ENCODE measurements at regions of chr4 and their contacts with region 1.

Region 1: GRCh38 chr4:145132511-145133098 is 34.5 kb downstream of the ABCE1 start:
- DNase-seq: no peak
- H3K4me3 Mint-ChIP-seq: peak overlapping the region; percentile 23
- H3K27ac Mint-ChIP-seq: peak overlapping the region; percentile 65
- H3K4me1 Mint-ChIP-seq: peaks cover 64% of the 10 kb centered on the region
- H3K27me3 Mint-ChIP-seq: no peaks in the 10 kb centered on the region

Region 2: DNA sequence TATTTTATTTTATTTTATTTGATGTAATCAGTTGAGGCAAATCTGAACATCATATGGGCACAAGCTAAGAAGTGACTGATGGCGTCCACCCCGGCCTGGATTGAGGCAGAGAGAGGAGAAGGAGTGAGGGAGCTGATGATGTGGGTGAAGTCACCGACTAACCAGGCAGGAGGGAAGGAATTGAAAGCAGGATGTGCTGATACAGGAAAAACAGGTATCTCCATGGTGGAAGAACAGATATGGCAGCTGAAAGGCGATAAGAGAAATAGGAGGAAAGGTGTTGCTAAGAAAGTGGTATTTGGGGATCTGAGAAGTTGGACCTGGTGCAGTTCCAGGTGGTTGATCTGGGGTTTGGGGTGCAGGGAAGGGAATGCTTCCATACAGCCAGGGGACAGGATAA is 1075.8 kb before region 1 on chr4:
- intact Hi-C with region 1: no loop called
- DNase-seq: no peak
- H3K4me3 Mint-ChIP-seq: no peak overlapping the region
- H3K27ac Mint-ChIP-seq: no peak overlapping the region
- H3K4me1 Mint-ChIP-seq: no peaks in the 10 kb centered on the region
- H3K27me3 Mint-ChIP-seq: no peaks in the 10 kb centered on the region

Region 3: DNA sequence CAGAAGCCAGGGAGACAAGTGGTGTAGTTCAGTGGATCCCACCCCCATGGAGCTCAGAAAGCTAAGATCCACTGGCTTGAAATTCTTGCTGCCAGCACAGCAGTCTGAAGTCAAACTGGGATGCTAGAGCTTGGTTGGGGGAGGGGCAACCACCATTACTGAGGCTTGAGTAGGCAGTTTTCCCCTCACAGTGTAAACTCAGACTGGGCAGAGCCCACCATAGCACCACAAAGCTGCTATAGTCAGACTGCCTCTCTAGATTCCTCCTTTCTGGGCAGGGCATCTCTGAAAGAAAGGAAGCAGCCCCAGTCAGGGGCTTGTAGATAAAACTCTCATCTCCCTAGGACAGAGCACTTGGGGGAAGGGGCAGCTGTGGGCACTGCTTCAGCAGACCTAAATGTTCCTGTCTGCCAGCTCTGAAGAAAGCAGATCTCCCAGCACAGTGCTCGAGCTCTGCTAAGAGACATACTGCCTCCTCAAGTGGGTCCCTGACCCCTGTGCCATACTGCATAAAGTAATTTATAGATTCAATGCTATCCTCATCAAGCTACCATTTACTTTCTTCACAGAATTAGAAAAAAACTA is 323.5 kb before region 1 on chr4:
- intact Hi-C with region 1: no loop called
- DNase-seq: no peak
- H3K4me3 Mint-ChIP-seq: no peak overlapping the region
- H3K27ac Mint-ChIP-seq: no peak overlapping the region
- H3K4me1 Mint-ChIP-seq: no peaks in the 10 kb centered on the region
- H3K27me3 Mint-ChIP-seq: no peaks in the 10 kb centered on the region

Region 4: DNA sequence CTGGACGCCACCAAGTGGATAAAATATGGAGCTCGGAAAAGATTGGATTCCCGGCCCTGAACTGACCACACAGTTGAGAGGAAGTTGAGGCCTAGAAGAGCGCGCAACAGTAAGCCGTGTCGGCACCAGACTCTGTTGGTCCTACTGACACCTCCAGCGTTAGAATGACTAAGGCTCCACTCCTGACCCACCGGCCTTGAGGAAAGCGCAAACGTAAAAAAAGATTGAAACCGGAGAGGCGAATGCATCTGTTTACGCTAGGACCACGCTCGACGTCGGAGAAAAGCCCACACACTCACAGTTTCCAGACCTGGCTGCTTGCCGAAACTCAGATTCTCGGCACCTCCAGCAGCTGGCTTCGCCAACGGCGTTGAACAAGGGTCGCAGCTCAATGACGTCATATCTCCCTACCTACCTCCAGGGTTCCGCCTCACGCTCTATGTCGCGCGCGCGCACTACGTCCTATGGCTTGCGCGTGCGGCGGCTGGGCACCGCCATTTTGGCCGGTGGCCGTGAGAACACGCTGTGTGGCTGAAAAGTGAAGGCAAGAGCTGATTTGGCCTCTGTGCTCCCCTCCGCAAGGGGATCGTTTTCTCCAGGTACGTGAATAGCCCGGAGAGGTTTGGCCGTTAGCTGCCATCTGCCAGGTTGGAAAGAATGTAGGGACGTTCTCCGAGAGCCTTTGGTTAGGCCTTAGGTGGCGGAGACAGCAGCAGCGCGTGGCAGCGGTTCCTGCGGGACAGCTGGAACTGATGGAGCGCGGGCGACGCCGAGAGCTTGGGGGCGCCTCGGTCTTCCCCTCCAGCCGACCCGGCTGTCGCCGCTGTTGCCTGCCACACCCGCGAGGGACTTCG is 34.6 kb before region 1 on chr4 and contains the starts of genes ABCE1 and ANAPC10:
- intact Hi-C with region 1: loop called (anchors 1 kb)
- DNase-seq: peak; percentile 93
- H3K4me3 Mint-ChIP-seq: peak within 1 kb of the TSS; percentile 95
- H3K27ac Mint-ChIP-seq: peak within 1 kb of the TSS; percentile 99
- H3K4me1 Mint-ChIP-seq: peaks cover 25% of the 10 kb centered on the region
- H3K27me3 Mint-ChIP-seq: no peaks in the 10 kb centered on the region
- total RNA-seq, gene ABCE1: 162 and 173 TPM in 2 replicates
- total RNA-seq, gene ANAPC10: 28.0 and 29.4 TPM in 2 replicates

Region 5: GRCh38 chr4:145154573-145154972 is 22.0 kb after region 1 on chr4:
- intact Hi-C with region 1: loop called (anchors 2 kb)
- DNase-seq: no peak
- H3K4me3 Mint-ChIP-seq: no peak overlapping the region
- H3K27ac Mint-ChIP-seq: no peak overlapping the region
- H3K4me1 Mint-ChIP-seq: peaks cover 30% of the 10 kb centered on the region
- H3K27me3 Mint-ChIP-seq: no peaks in the 10 kb centered on the region

Measured in activated T-helper 2 cell treated with anti-CD3 and anti-CD28 coated beads, Interferon-gamma antibody, Interleukin-2, Interleukin-4, amounts not matched to agents 10 μg/mL and 5 μg/mL and 100 μg/mL, durations not matched to agents 14 hours and 24 hours and 36 hours (primary cell).